ENCODE measurements at regions of chr7 and their contacts with region 1.

Region 1: DNA sequence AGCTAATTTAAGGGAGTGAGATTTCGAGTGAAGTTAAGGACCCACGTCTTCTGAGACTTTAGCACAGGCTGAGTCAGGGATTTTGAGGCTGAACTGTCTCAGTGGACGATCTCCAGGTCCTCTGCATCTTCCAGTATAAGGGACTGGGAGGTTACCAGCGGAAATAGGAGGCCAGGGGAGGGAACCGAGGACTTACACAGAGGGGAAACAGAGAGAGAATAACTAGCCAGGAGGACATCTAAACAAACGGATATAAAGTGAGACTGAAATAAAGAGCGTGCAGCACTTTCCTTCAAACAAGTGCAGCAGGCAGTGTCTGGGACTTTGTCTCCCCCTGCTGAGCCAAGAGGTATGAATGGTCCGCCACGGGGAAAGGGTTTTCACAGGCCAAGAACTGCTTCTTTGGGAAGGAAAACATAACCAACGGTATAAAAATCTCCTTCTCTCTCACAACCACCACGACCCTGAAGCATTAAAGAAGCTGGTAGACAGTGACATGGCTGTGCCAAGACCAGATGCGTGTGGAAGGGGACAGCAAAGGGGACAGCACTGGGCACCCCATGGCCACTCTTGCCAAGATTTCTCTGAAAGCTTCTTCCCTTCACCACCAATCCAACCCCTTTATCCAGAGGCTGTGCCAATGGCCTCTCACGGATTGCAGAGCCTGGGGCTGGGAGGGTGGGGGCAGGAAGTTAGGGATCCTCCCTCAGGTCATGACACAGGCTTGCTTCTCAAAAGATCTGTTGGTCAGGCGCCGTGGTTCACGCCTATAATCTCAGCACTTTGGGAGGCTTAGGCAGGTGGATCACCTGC is 72.0 kb downstream of the SLC37A3 start:
- DNase-seq: peak; percentile 60
- H3K4me3 ChIP-seq: no peak overlapping the region
- H3K27ac ChIP-seq: no peak overlapping the region
- H3K4me1 ChIP-seq: no peaks in the 10 kb centered on the region
- CTCF ChIP-seq: peak; percentile 79

Region 2: DNA sequence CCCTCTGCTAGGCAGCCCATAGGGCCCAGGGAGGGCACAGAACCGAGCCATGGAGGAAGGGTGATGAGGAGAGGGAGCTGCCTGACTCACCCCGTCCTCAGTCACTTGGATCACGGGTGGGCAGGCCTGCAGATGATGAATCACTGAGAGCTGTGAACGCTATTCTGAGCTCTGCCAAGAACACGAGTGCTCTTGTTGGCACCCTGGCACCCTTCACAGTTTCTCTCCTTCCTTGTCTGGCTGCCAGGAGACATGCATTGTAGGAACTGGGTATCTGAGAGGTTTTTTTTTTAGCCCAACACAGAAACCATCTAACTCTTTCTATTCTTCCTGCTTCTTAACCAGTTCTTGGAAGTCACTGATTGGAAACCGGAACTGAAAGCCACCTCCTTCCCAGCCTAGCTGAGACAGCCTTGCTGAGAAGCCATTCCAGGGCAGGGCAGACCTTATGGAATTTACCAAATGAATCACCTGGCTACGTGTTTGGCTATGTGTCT is 10.1 kb before region 1 on chr7:
- CTCF ChIA-PET with region 1: no interaction called
- POLR2A ChIA-PET with region 1: no interaction called
- intact Hi-C with region 1: no loop called
- DNase-seq: no peak
- H3K4me3 ChIP-seq: no peak overlapping the region
- H3K27ac ChIP-seq: no peak overlapping the region
- H3K4me1 ChIP-seq: no peaks in the 10 kb centered on the region
- CTCF ChIP-seq: no peak

Region 3: DNA sequence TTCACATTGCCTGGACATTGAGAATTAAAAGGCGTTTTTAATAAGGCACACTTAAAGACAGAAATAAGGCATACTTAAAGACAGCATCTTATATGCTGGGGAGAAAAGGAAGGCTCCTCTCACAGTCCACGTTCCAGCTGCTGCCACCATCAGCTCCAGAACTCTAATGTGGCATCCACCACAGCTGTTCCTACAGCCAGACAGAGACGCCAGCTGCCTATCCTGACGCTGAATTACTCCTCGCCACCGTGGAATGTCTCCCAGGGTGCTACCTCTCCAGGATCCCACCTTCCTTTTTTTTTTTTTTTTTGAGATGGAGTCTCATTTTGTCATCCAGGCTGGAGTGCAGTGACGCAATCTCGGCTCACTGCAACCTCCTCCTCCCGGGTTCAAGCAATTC is 41.2 kb after region 1 on chr7:
- CTCF ChIA-PET with region 1: no interaction called
- POLR2A ChIA-PET with region 1: no interaction called
- intact Hi-C with region 1: no loop called
- DNase-seq: no peak
- H3K4me3 ChIP-seq: no peak overlapping the region
- H3K27ac ChIP-seq: no peak overlapping the region
- H3K4me1 ChIP-seq: no peaks in the 10 kb centered on the region
- CTCF ChIP-seq: no peak

Region 4: DNA sequence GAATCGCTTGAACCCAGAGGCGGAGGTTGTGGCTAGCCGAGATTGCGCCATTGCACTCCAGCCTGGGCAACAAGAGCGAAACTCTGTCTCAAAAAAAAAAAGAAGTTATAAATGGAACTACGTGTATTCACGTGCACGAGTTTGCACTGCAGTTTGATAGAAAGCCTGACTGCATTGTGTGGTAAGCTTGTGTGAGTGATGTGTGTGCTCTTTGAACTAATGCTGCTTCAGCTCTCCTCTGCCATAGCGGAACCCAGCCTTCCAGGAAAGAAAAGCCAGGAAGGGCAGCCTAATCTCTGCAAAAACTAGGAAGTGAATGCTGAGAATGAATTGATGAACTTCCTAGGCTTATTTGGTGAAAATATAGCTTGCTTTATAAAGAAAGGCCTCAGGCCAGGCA is 168.5 kb after region 1 on chr7:
- CTCF ChIA-PET with region 1: no interaction called
- POLR2A ChIA-PET with region 1: no interaction called
- intact Hi-C with region 1: loop called (anchors 5 kb)
- DNase-seq: no peak
- H3K4me3 ChIP-seq: no peak overlapping the region
- H3K27ac ChIP-seq: no peak overlapping the region
- H3K4me1 ChIP-seq: no peaks in the 10 kb centered on the region
- CTCF ChIP-seq: no peak

Measured in OCI-LY7 (cell line).